ENCODE measurements at regions of chr20 and their contacts with region 1.

Region 1: GRCh38 chr20:50625986-50626677 is 65.2 kb downstream of the RIPOR3 start:
- DNase-seq: peak; percentile 67 to 73
- ATAC-seq: peak; percentile 75 to 89
- H3K4me3 ChIP-seq: no peak overlapping the region
- H3K27ac ChIP-seq: peak overlapping the region; percentile 70 to 79
- H3K4me1 ChIP-seq: peaks cover 30% of the 10 kb centered on the region
- CTCF ChIP-seq: peak; percentile 81
- EP300 ChIP-seq: no peak
- POLR2A ChIP-seq: no peak
- RAD21 ChIP-seq: peak; percentile 95 to 97

Region 2: DNA sequence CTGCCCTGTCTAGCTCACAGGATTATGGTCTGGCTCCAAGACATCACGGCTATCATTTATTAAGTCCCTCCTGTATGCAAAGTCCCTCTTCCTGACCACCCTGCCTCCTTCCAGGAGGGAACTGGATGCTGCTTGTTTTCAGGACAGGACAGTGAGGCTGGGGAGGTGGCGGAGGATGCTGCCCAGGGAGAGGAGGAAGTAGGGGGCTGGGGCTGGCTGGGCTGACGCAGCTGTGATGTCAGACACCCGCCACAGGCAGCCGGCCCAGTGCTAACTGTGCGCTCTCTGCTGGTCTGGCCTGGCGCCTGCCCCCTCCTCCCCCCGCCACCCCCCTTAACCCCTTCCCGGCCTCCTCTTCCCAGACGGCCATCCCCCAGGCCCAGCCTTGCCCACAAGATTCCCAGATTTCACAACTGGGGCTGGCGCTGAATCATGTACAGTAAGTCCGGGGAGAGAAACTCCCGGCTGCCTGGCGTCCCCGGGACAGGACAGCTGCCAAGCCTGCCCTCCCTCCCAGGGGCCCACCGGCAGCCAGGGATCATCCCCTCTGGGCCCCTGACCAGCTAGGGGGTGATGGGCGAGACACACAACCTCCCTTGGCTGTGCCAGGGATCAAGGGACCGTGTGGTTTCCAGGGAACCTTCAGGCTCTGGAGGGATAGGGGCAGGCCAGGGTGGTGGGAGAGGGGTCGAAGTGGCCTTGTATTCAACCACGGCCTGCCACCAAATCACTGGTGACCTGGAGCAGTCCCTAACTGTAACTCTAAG is 317.4 kb before region 1 on chr20:
- CTCF ChIA-PET with region 1: no interaction called
- POLR2A ChIA-PET with region 1: no interaction called
- DNase-seq: peak; percentile 90 to 98
- ATAC-seq: peak; percentile 81 to 85
- H3K4me3 ChIP-seq: peak overlapping the region; percentile 29
- H3K27ac ChIP-seq: peak overlapping the region; percentile 93 to 98
- H3K4me1 ChIP-seq: peaks cover 95% of the 10 kb centered on the region
- CTCF ChIP-seq: no peak
- EP300 ChIP-seq: peak; percentile 88 to 99; a peak in 4 of 5 replicates
- POLR2A ChIP-seq: peak; percentile 33
- RAD21 ChIP-seq: peak; percentile 25 to 82

Region 3: GRCh38 chr20:50610221-50610620 is 15.9 kb before region 1 on chr20:
- CTCF ChIA-PET with region 1: interaction called, 14 read pairs
- POLR2A ChIA-PET with region 1: no interaction called
- DNase-seq: peak in 1 of 2 experiments; percentile 38
- ATAC-seq: peak; percentile 60 to 76
- H3K4me3 ChIP-seq: no peak overlapping the region
- H3K27ac ChIP-seq: no peak overlapping the region
- H3K4me1 ChIP-seq: no peaks in the 10 kb centered on the region
- CTCF ChIP-seq: no peak
- EP300 ChIP-seq: no peak
- POLR2A ChIP-seq: no peak
- RAD21 ChIP-seq: peak in 1 of 2 experiments; percentile 33; a peak in 2 of 5 replicates

Region 4: DNA sequence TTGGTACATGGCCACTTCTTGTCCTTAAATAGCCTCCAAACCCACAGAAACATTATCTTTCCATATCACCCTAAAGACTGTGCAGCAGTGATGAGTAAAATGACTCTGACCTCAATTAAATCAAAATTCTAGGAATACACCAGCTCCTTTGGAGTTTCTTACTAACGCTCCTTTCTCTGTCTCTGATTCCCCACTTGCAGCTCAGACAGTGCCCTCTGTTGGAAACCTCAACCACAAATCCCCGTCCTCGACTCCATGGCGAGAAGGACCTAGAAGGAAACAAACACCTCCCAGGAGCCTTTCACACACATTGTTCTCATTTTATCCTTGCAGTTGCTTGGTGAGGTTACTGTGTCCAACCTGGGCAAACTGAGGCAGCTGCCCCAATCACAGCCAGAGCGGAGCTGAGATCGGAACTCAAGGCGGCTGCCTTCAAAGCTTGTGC is 87.5 kb after region 1 on chr20:
- CTCF ChIA-PET with region 1: interaction called, 29 read pairs
- POLR2A ChIA-PET with region 1: no interaction called
- DNase-seq: peak in 1 of 2 experiments; percentile 56
- ATAC-seq: peak; percentile 54 to 77; a peak in 3 of 6 replicates
- H3K4me3 ChIP-seq: no peak overlapping the region
- H3K27ac ChIP-seq: peak overlapping the region in 1 of 2 experiments; percentile 44; a peak in 2 of 6 replicates
- H3K4me1 ChIP-seq: peaks cover 14% of the 10 kb centered on the region; the same call in 1 of the 3 replicates
- CTCF ChIP-seq: peak; percentile 40
- EP300 ChIP-seq: no peak
- POLR2A ChIP-seq: no peak
- RAD21 ChIP-seq: peak; percentile 56 to 62

Region 5: DNA sequence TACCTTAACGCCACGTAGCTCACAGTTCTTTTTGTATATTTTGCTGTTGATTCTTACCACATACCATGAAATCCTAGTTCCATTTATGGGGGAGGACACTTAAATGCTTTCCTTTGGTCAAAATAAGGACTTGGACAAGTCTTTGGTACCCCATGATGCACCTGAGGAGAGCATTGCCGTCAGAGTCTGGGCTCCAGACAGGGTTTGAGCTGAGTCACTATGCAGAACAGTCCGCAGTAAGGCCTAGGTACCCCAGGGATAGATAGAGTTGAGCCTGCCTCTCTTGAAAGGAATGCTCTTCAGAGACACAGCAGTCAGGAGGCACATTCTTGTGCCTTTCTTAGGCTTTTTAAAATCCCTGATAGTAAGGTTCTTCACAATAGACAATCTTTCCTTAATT is 111.2 kb after region 1 on chr20:
- CTCF ChIA-PET with region 1: interaction called, 85 read pairs
- POLR2A ChIA-PET with region 1: no interaction called
- DNase-seq: peak in 1 of 2 experiments; percentile 62
- ATAC-seq: peak; percentile 65 to 78; a peak in 5 of 6 replicates
- H3K4me3 ChIP-seq: no peak overlapping the region
- H3K27ac ChIP-seq: peak overlapping the region; percentile 44 to 59
- H3K4me1 ChIP-seq: peaks cover 89% of the 10 kb centered on the region
- CTCF ChIP-seq: no peak
- EP300 ChIP-seq: no peak
- POLR2A ChIP-seq: no peak
- RAD21 ChIP-seq: no peak

Region 6: GRCh38 chr20:50750145-50750671 is 124.1 kb after region 1 on chr20:
- CTCF ChIA-PET with region 1: interaction called, 130 read pairs
- POLR2A ChIA-PET with region 1: no interaction called
- DNase-seq: no peak
- ATAC-seq: no peak
- H3K4me3 ChIP-seq: no peak overlapping the region
- H3K27ac ChIP-seq: peak overlapping the region in 1 of 2 experiments; percentile 36; a peak in 2 of 6 replicates
- H3K4me1 ChIP-seq: peaks cover 53% of the 10 kb centered on the region
- CTCF ChIP-seq: no peak
- EP300 ChIP-seq: no peak
- POLR2A ChIP-seq: no peak
- RAD21 ChIP-seq: no peak

Measured in A549 (cell line).